Caco-2 (cell line): ENCODE measurements at regions of chr1 and their contacts with region 1.

Region 1: DNA sequence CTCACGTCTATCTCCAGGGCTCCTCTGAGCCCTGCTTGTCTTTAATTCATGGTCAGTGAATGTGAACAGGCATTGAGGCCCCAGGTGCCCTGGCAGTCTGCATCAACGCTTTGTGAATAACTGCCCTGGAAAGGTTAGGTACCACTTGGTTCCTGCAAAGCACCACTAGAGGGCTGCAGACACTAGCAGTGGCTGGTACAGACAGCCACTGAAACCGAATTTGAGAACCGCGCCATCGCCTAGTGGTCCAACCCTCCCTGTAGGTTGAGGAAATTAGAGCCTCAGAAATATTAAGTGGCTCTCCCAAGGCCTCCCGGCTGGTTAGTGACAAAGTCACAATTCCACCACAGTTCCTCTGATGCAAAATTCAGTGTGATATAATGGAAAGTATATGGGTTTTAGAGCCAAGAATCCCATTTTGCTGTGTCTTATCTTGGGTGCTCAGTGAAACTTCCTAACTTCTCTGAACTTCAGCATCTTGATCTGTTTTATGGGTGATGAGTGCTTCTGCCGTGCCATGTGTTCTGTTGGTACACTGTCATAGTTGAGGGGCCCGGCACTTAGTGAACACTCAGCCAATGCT is 46.2 kb upstream of the BCL9 start:
- DNase-seq: peak; percentile 68 to 76
- H3K4me3 ChIP-seq: no peak overlapping the region
- H3K4me3 Mint-ChIP-seq: no peak overlapping the region
- H3K27ac Mint-ChIP-seq: no peak overlapping the region
- H3K4me1 ChIP-seq: no peaks in the 10 kb centered on the region
- H3K4me1 Mint-ChIP-seq: no peaks in the 10 kb centered on the region
- H3K27me3 ChIP-seq: no peaks in the 10 kb centered on the region
- H3K27me3 Mint-ChIP-seq: no peaks in the 10 kb centered on the region
- CTCF ChIP-seq: peak; percentile 80 to 92

Region 2: DNA sequence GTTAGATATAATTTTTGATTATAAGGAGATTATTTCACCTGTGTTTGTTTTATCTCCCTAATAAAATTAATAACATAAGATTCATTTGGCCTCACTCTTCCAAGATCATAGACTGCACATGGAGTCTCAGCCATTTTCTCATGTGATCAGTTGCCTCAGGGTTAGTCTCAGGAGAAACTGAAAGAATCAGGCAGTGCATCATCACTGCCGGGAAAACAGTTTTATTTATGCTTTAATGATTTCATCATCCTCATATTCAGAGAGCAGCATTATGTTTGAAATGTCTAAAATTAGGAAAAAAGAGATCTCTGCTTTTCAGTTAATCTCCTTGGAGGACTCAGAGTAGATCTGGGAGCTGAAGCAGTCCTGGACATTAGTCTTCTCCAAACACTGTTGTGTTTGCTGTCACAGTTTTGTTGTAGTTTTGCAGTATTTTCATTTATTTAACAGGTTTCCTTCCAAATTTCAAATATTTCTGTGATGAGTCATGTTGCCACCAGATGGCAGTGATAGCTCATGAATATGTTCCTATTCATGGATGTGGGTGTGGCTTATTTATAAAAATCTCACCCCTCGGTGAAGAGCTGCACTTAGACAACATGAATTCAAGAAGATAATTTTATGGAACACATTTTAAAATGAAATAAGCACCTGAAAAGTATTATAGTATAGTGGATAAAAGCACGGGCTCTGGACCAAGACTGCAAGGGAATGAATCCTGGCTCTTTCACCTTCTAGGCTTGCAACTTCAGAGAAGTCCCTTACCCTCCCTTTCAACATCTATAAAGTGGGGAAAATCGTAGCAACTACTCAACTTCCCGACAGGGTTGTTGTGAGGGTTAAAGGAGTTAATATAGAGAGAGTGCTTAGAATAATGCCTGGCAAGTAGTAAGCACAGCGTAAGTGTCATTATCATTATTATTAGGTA is 221.4 kb before region 1 on chr1:
- CTCF ChIA-PET with region 1: interaction called, 7 read pairs
- POLR2A ChIA-PET with region 1: no interaction called
- intact Hi-C with region 1: loop called (anchors 1 kb)
- DNase-seq: peak in 1 of 2 experiments; percentile 50
- H3K4me3 ChIP-seq: no peak overlapping the region
- H3K4me3 Mint-ChIP-seq: no peak overlapping the region
- H3K27ac Mint-ChIP-seq: no peak overlapping the region
- H3K4me1 ChIP-seq: no peaks in the 10 kb centered on the region
- H3K4me1 Mint-ChIP-seq: no peaks in the 10 kb centered on the region
- H3K27me3 ChIP-seq: no peaks in the 10 kb centered on the region
- H3K27me3 Mint-ChIP-seq: no peaks in the 10 kb centered on the region
- CTCF ChIP-seq: peak; percentile 49 to 55

Region 3: GRCh38 chr1:147627435-147628110 is 132.5 kb after region 1 on chr1:
- CTCF ChIA-PET with region 1: no interaction called
- POLR2A ChIA-PET with region 1: no interaction called
- intact Hi-C with region 1: loop called (anchors 1 kb)
- DNase-seq: peak; percentile 59 to 65
- H3K4me3 ChIP-seq: no peak overlapping the region
- H3K4me3 Mint-ChIP-seq: no peak overlapping the region
- H3K27ac Mint-ChIP-seq: no peak overlapping the region
- H3K4me1 ChIP-seq: peaks cover 30% of the 10 kb centered on the region
- H3K4me1 Mint-ChIP-seq: peaks cover 35% of the 10 kb centered on the region
- H3K27me3 ChIP-seq: no peaks in the 10 kb centered on the region
- H3K27me3 Mint-ChIP-seq: no peaks in the 10 kb centered on the region
- CTCF ChIP-seq: peak; percentile 88 to 90

Region 4: DNA sequence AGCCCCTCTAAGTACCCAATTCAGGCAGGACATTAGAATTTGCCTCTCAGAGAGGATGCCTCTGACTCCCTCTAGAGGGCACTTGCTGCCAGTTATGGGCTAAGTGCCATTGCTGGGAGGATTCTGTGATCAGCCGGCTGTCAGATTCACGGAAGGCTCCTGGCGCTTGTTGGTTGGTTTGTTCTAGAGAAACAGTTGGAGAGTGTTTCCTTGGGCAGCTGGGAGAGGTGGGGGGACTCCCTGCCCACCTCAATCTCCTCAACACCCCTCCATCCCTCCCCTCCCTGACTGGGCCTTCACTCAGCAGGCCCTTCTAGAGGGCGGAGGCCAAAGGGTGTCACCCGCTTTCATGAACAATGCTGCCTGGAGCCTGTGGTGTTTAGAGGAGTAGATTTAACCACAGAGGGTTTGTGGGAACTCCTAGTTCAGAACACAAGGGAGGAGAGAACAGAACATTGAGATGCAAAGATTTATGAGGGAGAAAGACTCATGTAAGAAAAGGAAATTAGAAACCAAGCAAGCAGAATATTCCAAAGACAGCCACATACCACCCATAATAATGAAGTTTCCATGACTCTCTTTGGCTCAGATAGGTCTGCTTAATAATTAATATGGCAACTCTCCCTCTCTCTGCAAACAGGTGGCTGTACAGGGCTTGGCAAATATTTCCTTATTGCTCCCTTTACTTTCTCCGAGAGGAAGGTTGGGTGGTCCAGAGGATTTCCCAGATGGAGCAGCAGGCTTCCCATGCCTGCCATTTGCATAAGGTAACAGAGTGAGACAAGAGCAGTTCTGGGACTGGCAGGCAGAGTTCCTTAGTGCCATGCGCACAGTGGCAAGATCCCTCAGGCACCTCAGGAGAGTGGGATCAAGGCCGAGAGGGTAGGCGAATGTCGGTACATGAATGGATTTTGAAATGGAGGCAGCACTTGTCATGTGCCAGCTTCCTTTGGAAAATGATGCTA is 205.2 kb after region 1 on chr1:
- CTCF ChIA-PET with region 1: no interaction called
- POLR2A ChIA-PET with region 1: no interaction called
- intact Hi-C with region 1: loop called (anchors 5 kb)
- DNase-seq: peak; percentile 49 to 63
- H3K4me3 ChIP-seq: no peak overlapping the region
- H3K4me3 Mint-ChIP-seq: no peak overlapping the region
- H3K27ac Mint-ChIP-seq: no peak overlapping the region
- H3K4me1 ChIP-seq: no peaks in the 10 kb centered on the region
- H3K4me1 Mint-ChIP-seq: no peaks in the 10 kb centered on the region
- H3K27me3 ChIP-seq: no peaks in the 10 kb centered on the region
- H3K27me3 Mint-ChIP-seq: no peaks in the 10 kb centered on the region
- CTCF ChIP-seq: peak; percentile 83 to 88